ENCODE measurements at regions of chrX and their contacts with region 1.

Region 1: GRCh38 chrX:26651755-26652154 is 435.8 kb downstream of the MAGEB5 start:
- DNase-seq: peak; percentile 9
- H3K4me3 ChIP-seq: no peak overlapping the region
- H3K27ac ChIP-seq: no peak overlapping the region
- H3K4me1 ChIP-seq: no peaks in the 10 kb centered on the region
- CTCF ChIP-seq: peak; percentile 70

Region 2: GRCh38 chrX:27186664-27187063 is 534.9 kb after region 1 on chrX:
- CTCF ChIA-PET with region 1: no interaction called
- POLR2A ChIA-PET with region 1: no interaction called
- intact Hi-C with region 1: loop called (anchors 5 kb)
- DNase-seq: peak; percentile 30
- H3K4me3 ChIP-seq: no peak overlapping the region
- H3K27ac ChIP-seq: no peak overlapping the region
- H3K4me1 ChIP-seq: no peaks in the 10 kb centered on the region
- CTCF ChIP-seq: peak; percentile 79

Region 3: DNA sequence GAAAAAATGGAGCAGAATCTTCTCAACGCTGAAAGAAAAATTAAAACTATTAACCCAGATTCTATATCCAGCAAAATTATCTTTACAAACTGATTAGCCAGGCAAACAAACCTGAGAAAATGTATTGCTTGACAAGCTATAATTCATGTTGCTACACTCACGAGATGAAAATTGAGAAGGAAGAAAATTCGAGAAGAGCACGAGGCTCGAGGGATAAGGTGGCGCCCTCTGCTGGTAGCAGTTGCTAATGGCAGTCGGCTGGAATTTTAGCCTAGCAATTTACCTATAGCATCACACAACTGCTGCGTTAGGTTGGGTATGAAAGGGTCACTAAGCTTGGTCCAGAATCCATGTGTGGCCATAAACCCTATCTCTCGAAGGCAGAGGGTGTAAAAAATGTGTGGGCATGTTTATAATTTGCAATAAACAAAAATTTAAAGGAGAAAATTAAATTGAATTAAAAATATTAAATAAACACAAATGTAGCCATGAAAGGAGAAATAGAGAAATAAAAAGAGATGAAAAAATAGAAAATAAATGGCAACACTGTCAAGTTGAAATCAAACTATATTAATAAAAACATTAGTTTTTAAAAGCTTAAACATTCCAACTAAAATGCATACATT is 684.8 kb after region 1 on chrX:
- CTCF ChIA-PET with region 1: no interaction called
- POLR2A ChIA-PET with region 1: no interaction called
- intact Hi-C with region 1: loop called (anchors 10 kb)
- DNase-seq: peak; percentile 30
- H3K4me3 ChIP-seq: no peak overlapping the region
- H3K27ac ChIP-seq: no peak overlapping the region
- H3K4me1 ChIP-seq: no peaks in the 10 kb centered on the region
- CTCF ChIP-seq: peak; percentile 83